B cell (primary cell): ENCODE measurements at regions of chrX and their contacts with region 1.

Region 1: DNA sequence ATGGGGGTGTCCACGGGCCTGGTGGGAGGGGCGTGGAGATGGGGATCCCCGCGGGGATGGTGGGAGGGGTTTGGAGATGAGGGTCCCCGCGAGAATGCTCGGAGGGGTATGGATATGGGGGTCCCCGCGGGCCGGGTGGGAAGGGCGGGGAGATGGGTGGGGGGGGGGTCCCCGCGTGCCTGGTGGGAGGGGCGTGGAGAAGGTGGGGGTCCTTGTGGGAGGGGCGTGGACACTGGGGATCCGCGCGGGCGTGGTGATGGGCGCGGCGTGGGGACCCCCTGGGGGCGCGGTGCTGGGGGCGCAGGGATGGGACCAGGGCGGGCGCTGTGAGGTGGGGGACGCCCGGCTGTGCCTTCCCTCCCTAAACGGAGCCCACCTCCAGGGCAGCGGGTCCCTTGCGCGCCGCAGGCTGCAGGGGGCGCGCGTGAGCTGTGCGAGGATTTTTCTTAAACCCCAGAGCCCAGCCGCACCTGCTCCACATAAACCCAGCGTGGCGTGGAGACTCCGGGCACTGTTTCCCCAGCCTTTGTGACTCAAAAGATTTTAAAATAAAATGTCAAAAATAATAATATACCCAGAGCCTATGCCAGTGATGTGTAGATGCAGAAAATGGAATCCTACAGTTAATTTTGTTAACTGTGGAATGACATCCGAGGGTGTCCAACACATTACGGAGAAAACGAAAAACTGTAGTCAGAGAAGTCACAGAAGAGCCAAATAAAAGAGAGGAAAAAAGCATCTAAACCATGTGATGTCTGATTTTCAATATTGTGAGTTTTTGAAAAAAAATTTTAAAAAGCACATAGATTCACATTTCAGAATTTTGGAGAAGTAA is 1.5 kb upstream of the ASMTL start:
- DNase-seq: peak; percentile 93
- ATAC-seq: peak; percentile 22
- H3K4me3 ChIP-seq: peak overlapping the region in 4 of 5 experiments; percentile 62 to 81 (median 74)
- H3K4me3 Mint-ChIP-seq: peak overlapping the region; percentile 80
- H3K27ac ChIP-seq: peak overlapping the region; percentile 91 to 96
- H3K27ac Mint-ChIP-seq: peak overlapping the region; percentile 77
- H3K4me1 ChIP-seq: peaks cover 20 to 56% of the 10 kb centered on the region in 2 donors
- H3K4me1 Mint-ChIP-seq: peaks cover 30% of the 10 kb centered on the region
- H3K27me3 ChIP-seq: no peaks in the 10 kb centered on the region
- H3K27me3 Mint-ChIP-seq: no peaks in the 10 kb centered on the region
- CTCF ChIP-seq: peak; percentile 97

Region 2: DNA sequence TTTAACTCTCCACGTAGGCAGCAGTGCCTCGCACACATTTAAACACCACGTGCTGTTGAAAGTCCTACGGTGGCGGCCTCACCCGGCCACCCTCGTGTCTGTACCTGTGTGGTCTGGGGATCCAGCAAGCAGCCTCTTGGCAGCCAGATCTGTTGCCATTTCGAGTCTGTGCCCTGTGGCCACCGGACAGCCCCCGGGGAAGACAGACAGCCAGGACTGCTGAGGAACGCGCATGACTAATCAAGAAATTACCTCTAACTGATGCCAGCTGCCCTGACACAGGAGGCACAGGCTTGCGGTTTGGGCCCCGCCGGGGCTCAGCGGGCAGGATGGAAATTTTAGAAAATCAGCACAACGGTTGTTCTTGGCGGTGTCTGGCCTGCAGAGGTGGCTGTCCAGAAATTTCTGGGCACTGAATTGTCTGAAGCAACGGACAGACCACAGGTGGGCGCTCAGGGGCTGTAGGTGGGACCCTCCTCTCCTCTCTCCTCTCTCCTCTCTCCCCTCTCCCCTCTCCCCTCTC is 14.1 kb after region 1 on chrX:
- CTCF ChIA-PET with region 1: no interaction called
- POLR2A ChIA-PET with region 1: no interaction called
- intact Hi-C with region 1: loop called (anchors 1 kb)
- DNase-seq: peak; percentile 86
- ATAC-seq: peak; percentile 67
- H3K4me3 ChIP-seq: no peak overlapping the region
- H3K4me3 Mint-ChIP-seq: peak overlapping the region; percentile 80
- H3K27ac ChIP-seq: peak overlapping the region; percentile 69 to 84
- H3K27ac Mint-ChIP-seq: peak overlapping the region; percentile 95
- H3K4me1 ChIP-seq: peaks cover 68 to 86% of the 10 kb centered on the region in 2 donors
- H3K4me1 Mint-ChIP-seq: peaks cover 68% of the 10 kb centered on the region
- H3K27me3 ChIP-seq: no peaks in the 10 kb centered on the region
- H3K27me3 Mint-ChIP-seq: no peaks in the 10 kb centered on the region
- CTCF ChIP-seq: peak; percentile 25

Region 3: GRCh38 chrX:1500701-1501624 is 46.8 kb after region 1 on chrX:
- CTCF ChIA-PET with region 1: no interaction called
- POLR2A ChIA-PET with region 1: no interaction called
- intact Hi-C with region 1: loop called (anchors 2 kb)
- DNase-seq: peak; percentile 85
- ATAC-seq: peak; percentile 34
- H3K4me3 ChIP-seq: peak overlapping the region in 3 of 5 experiments; percentile 11 to 50 (median 31)
- H3K4me3 Mint-ChIP-seq: peak overlapping the region; percentile 70
- H3K27ac ChIP-seq: peak overlapping the region; percentile 93 to 94
- H3K27ac Mint-ChIP-seq: peak overlapping the region; percentile 93
- H3K4me1 ChIP-seq: peaks cover 46 to 61% of the 10 kb centered on the region in 2 donors
- H3K4me1 Mint-ChIP-seq: peaks cover 55% of the 10 kb centered on the region
- H3K27me3 ChIP-seq: no peaks in the 10 kb centered on the region
- H3K27me3 Mint-ChIP-seq: no peaks in the 10 kb centered on the region
- CTCF ChIP-seq: no peak

Region 4: GRCh38 chrX:1537035-1537715 is 83.0 kb after region 1 on chrX and contains the start of gene P2RY8:
- CTCF ChIA-PET with region 1: no interaction called
- POLR2A ChIA-PET with region 1: no interaction called
- intact Hi-C with region 1: loop called (anchors 1 kb)
- DNase-seq: peak; percentile 88
- ATAC-seq: peak; percentile 77
- H3K4me3 ChIP-seq: peak within 1 kb of the TSS; percentile 86 to 97 (median 95)
- H3K4me3 Mint-ChIP-seq: peak within 1 kb of the TSS; percentile 98
- H3K27ac ChIP-seq: peak within 1 kb of the TSS; percentile 87 to 90
- H3K27ac Mint-ChIP-seq: peak within 1 kb of the TSS; percentile 99
- H3K4me1 ChIP-seq: peaks cover 7 to 29% of the 10 kb centered on the region in 2 donors
- H3K4me1 Mint-ChIP-seq: peaks cover 27% of the 10 kb centered on the region
- H3K27me3 ChIP-seq: no peaks in the 10 kb centered on the region
- H3K27me3 Mint-ChIP-seq: no peaks in the 10 kb centered on the region
- CTCF ChIP-seq: peak; percentile 28
- total RNA-seq, gene P2RY8: 140 and 142 TPM in 2 replicates

Region 5: DNA sequence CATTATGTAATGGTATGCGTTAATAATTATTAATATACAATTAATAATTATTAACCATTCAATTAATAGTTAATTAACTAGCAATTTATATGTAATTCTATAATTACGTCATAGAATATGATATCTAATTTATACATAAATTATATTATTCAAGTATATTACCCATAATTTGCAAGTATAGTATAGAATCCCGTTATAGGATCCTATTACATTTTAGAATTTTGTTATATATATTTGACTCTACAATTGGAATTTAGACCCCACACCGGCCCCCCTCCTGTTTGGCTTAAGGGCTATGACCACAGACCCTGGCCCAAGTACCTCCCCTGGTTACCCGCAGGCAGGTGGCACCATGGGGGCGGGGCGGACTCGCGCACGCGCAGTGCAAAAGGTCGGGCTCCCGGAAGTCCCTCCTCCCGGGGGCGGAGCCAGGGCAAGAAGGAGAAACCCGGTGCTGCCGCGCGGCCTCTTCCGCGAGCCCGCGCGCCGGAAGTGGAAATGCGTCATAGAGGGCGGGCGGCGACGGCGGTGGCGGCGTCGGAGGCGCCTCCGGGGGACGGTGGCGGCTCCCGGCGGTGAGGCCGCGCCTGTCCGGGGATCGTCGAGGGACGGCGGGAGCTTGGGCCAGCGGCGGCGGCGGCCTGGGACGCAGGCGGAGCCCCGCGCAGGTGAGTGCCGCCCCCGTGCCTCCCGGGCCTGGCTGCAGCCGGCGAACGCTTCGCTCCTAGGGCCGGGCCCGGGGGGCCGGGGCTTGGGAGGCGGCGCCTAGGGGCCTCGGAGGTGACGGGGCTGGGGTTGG is 137.1 kb after region 1 on chrX and contains the start of gene AKAP17A:
- CTCF ChIA-PET with region 1: no interaction called
- POLR2A ChIA-PET with region 1: no interaction called
- intact Hi-C with region 1: loop called (anchors 1 kb)
- DNase-seq: peak; percentile 97
- ATAC-seq: peak; percentile 88
- H3K4me3 ChIP-seq: peak within 1 kb of the TSS; percentile 55 to 90 (median 78)
- H3K4me3 Mint-ChIP-seq: peak within 1 kb of the TSS; percentile 95
- H3K27ac ChIP-seq: peak within 1 kb of the TSS; percentile 61 to 81
- H3K27ac Mint-ChIP-seq: peak within 1 kb of the TSS; percentile 95
- H3K4me1 ChIP-seq: peaks cover 20 to 47% of the 10 kb centered on the region in 2 donors
- H3K4me1 Mint-ChIP-seq: peaks cover 40% of the 10 kb centered on the region
- H3K27me3 ChIP-seq: no peaks in the 10 kb centered on the region
- H3K27me3 Mint-ChIP-seq: no peaks in the 10 kb centered on the region
- CTCF ChIP-seq: peak; percentile 26
- total RNA-seq, gene AKAP17A: 126 and 129 TPM in 2 replicates

Region 6: GRCh38 chrX:1609311-1610161 is 155.4 kb after region 1 on chrX:
- CTCF ChIA-PET with region 1: no interaction called
- POLR2A ChIA-PET with region 1: no interaction called
- intact Hi-C with region 1: no loop called
- DNase-seq: no peak
- ATAC-seq: no peak
- H3K4me3 ChIP-seq: no peak overlapping the region
- H3K4me3 Mint-ChIP-seq: no peak overlapping the region
- H3K27ac ChIP-seq: no peak overlapping the region
- H3K27ac Mint-ChIP-seq: no peak overlapping the region
- H3K4me1 ChIP-seq: peaks cover 0 to 7% of the 10 kb centered on the region in 2 donors
- H3K4me1 Mint-ChIP-seq: peaks cover 4% of the 10 kb centered on the region
- H3K27me3 ChIP-seq: peaks cover 0 to under 1% (median 0%) of the 10 kb centered on the region in 4 experiments
- H3K27me3 Mint-ChIP-seq: no peaks in the 10 kb centered on the region
- CTCF ChIP-seq: no peak

Region 7: GRCh38 chrX:1657367-1658070 is 203.4 kb after region 1 on chrX:
- CTCF ChIA-PET with region 1: no interaction called
- POLR2A ChIA-PET with region 1: no interaction called
- intact Hi-C with region 1: loop called (anchors 1 kb)
- DNase-seq: peak; percentile 76
- ATAC-seq: peak; percentile 19
- H3K4me3 ChIP-seq: peak overlapping the region in 4 of 5 experiments; percentile 21 to 52 (median 33)
- H3K4me3 Mint-ChIP-seq: peak overlapping the region; percentile 85
- H3K27ac ChIP-seq: peak overlapping the region; percentile 75
- H3K27ac Mint-ChIP-seq: peak overlapping the region; percentile 84
- H3K4me1 ChIP-seq: peaks cover 11 to 32% of the 10 kb centered on the region in 2 donors
- H3K4me1 Mint-ChIP-seq: peaks cover 36% of the 10 kb centered on the region
- H3K27me3 ChIP-seq: no peaks in the 10 kb centered on the region
- H3K27me3 Mint-ChIP-seq: no peaks in the 10 kb centered on the region
- CTCF ChIP-seq: no peak

Region 8: GRCh38 chrX:1841746-1842145 is 387.6 kb after region 1 on chrX:
- CTCF ChIA-PET with region 1: no interaction called
- POLR2A ChIA-PET with region 1: no interaction called
- intact Hi-C with region 1: no loop called
- DNase-seq: no peak
- ATAC-seq: no peak
- H3K4me3 ChIP-seq: no peak overlapping the region
- H3K4me3 Mint-ChIP-seq: no peak overlapping the region
- H3K27ac ChIP-seq: no peak overlapping the region
- H3K27ac Mint-ChIP-seq: no peak overlapping the region
- H3K4me1 ChIP-seq: no peaks in the 10 kb centered on the region
- H3K4me1 Mint-ChIP-seq: no peaks in the 10 kb centered on the region
- H3K27me3 ChIP-seq: no peaks in the 10 kb centered on the region
- H3K27me3 Mint-ChIP-seq: no peaks in the 10 kb centered on the region
- CTCF ChIP-seq: no peak

Region 9: GRCh38 chrX:2608638-2609430 is 1154.7 kb after region 1 on chrX:
- CTCF ChIA-PET with region 1: no interaction called
- POLR2A ChIA-PET with region 1: no interaction called
- intact Hi-C with region 1: loop called (anchors 1 kb)
- DNase-seq: peak; percentile 90
- ATAC-seq: peak; percentile 97
- H3K4me3 ChIP-seq: peak overlapping the region; percentile 36 to 89 (median 83)
- H3K4me3 Mint-ChIP-seq: peak overlapping the region; percentile 94
- H3K27ac ChIP-seq: peak overlapping the region; percentile 43 to 58
- H3K27ac Mint-ChIP-seq: peak overlapping the region; percentile 89
- H3K4me1 ChIP-seq: peaks cover 16 to 25% of the 10 kb centered on the region in 2 donors
- H3K4me1 Mint-ChIP-seq: peaks cover 32% of the 10 kb centered on the region
- H3K27me3 ChIP-seq: no peaks in the 10 kb centered on the region
- H3K27me3 Mint-ChIP-seq: no peaks in the 10 kb centered on the region
- CTCF ChIP-seq: no peak